Mammary epithelial cell (primary cell): ENCODE measurements at regions of chr19 and their contacts with region 1.

Region 1: GRCh38 chr19:10095948-10096621 is 6.4 kb downstream of the ANGPTL6 start:
- DNase-seq: peak; percentile 87
- H3K4me3 ChIP-seq: peak overlapping the region; percentile 43 to 55 (median 53)
- H3K27ac ChIP-seq: peak overlapping the region; percentile 3
- H3K4me1 ChIP-seq: peaks cover 13% of the 10 kb centered on the region
- H3K27me3 ChIP-seq: no peaks in the 10 kb centered on the region
- CTCF ChIP-seq: no peak

Region 2: GRCh38 chr19:9986787-9987281 is 109.3 kb before region 1 on chr19:
- CTCF ChIA-PET with region 1: interaction called, 3 read pairs
- dilution Hi-C with region 1: loop called (anchors 5 kb)
- in situ Hi-C with region 1: no loop called
- intact Hi-C with region 1: no loop called
- DNase-seq: no peak
- H3K4me3 ChIP-seq: no peak overlapping the region
- H3K27ac ChIP-seq: no peak overlapping the region
- H3K4me1 ChIP-seq: no peaks in the 10 kb centered on the region
- H3K27me3 ChIP-seq: no peaks in the 10 kb centered on the region
- CTCF ChIP-seq: no peak

Region 3: GRCh38 chr19:10010247-10010691 is 85.8 kb before region 1 on chr19 and contains the start of gene COL5A3:
- CTCF ChIA-PET with region 1: interaction called, 4 read pairs
- dilution Hi-C with region 1: loop called (anchors 10 kb)
- in situ Hi-C with region 1: no loop called
- intact Hi-C with region 1: no loop called
- DNase-seq: peak; percentile 51
- H3K4me3 ChIP-seq: peak within 1 kb of the TSS; percentile 33 to 43 (median 36)
- H3K27ac ChIP-seq: no peak within 1 kb of the TSS
- H3K4me1 ChIP-seq: peaks cover 15% of the 10 kb centered on the region
- H3K27me3 ChIP-seq: no peaks in the 10 kb centered on the region
- CTCF ChIP-seq: no peak
- total RNA-seq, gene COL5A3: 0.33 to 4.5 TPM

Region 4: DNA sequence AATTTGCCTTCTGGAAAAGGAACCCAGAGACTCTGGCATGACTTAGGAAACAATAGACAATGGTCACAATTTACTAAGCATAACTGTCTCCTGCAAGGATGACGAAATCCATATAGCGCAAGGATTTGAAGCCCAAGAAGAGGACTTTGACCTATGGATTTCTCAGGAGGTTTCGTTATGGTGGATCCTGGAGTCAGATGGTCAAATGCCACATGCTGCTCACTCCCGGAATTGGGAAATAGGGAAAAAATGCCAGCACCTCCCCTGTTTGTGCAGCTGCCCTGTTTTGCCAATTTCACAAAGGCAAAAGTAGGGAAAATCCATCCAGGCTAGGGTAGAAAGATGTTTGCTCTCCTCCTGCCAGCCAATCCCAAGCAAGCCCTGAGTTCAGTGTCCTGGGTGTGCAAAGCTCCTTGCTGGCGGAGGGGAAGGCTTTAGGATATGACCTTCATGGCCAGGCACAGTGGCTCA is 59.4 kb before region 1 on chr19:
- CTCF ChIA-PET with region 1: no interaction called
- dilution Hi-C with region 1: no loop called
- in situ Hi-C with region 1: no loop called
- intact Hi-C with region 1: no loop called
- DNase-seq: no peak
- H3K4me3 ChIP-seq: no peak overlapping the region
- H3K27ac ChIP-seq: no peak overlapping the region
- H3K4me1 ChIP-seq: no peaks in the 10 kb centered on the region
- H3K27me3 ChIP-seq: no peaks in the 10 kb centered on the region
- CTCF ChIP-seq: no peak